Endothelial cell of umbilical vein (primary cell): ENCODE measurements at regions of chr16 and their contacts with region 1.

Region 1: DNA sequence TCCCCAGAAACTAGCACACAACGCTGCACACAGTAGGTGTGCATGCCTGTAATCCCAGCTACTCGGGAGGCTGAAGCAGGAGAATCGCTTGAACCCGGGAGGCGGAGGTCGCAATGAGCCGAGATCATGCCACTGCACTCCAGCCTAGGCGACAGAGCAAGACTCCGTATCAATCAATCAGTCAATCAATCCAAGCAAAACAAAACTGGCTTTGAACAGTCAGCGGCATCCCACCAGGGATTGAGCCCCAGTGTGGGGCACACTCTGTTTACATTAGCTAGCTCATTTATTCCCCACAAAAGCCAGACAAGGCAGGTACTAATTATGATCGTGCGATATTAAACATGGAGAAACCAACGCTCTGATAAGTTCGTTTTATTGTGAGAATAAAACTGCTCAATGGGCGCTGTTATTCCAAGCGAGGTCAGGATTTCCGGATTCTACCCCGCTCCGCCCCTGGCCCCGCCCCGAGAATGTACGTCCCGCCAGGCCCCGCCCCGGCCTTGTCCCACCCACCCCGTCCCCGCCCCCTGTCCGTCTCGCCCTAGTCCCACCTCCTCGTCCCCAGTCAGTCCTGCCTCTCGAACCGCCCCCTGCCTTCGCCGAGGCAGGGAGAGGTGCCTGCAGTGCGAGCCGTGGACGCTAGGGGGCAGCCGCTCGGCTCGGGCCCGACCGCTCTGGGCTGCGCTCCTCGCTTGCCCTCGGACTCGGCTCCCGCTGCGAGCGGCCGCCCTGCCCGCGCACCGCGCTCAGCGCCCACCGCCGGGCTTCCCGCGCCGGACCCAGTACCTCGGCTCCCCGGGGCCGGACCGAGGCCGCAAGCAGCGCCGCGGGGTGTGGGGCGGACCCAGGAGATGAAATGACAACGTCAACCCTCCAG is at the start of gene VPS4A:
- DNase-seq: peak; percentile 98
- H3K4me3 ChIP-seq: peak within 1 kb of the TSS; percentile 56 to 76 (median 59)
- H3K27ac ChIP-seq: peak within 1 kb of the TSS; percentile 46
- H3K4me1 ChIP-seq: peaks cover 10% of the 10 kb centered on the region
- H3K27me3 ChIP-seq: no peaks in the 10 kb centered on the region
- CTCF ChIP-seq: peak; percentile 86 to 96
- POLR2A ChIP-seq: peak; percentile 85
- total RNA-seq, gene VPS4A: 34.8 and 37.1 TPM in 2 replicates

Region 2: GRCh38 chr16:69330286-69331109 is 19.6 kb after region 1 on chr16 and contains the start of gene PDF:
- CTCF ChIA-PET with region 1: interaction called, 5 read pairs
- POLR2A ChIA-PET with region 1: no interaction called
- dilution Hi-C with region 1: no loop called
- intact Hi-C with region 1: loop called (anchors 1 kb)
- DNase-seq: peak; percentile 93
- H3K4me3 ChIP-seq: peak within 1 kb of the TSS; percentile 32 to 67 (median 47)
- H3K27ac ChIP-seq: peak within 1 kb of the TSS; percentile 86
- H3K4me1 ChIP-seq: peaks cover 21% of the 10 kb centered on the region
- H3K27me3 ChIP-seq: no peaks in the 10 kb centered on the region
- CTCF ChIP-seq: no peak
- POLR2A ChIP-seq: peak; percentile 95
- total RNA-seq, gene PDF: 13.3 and 16.7 TPM in 2 replicates